ENCODE measurements at regions of chr1 and their contacts with region 1.

Region 1: GRCh38 chr1:203273206-203273868 is 32.0 kb upstream of the BTG2 start:
- DNase-seq: peak; percentile 91
- H3K4me3 ChIP-seq: peak overlapping the region in 1 of 2 donors; percentile 8
- H3K27ac ChIP-seq: peak overlapping the region; percentile 56 to 96
- H3K4me1 ChIP-seq: peaks cover 14 to 16% of the 10 kb centered on the region in 2 donors
- H3K27me3 ChIP-seq: no peaks in the 10 kb centered on the region
- CTCF ChIP-seq: peak; percentile 95 to 99 (median 99)
- POLR2A ChIP-seq: peak in 1 of 2 donors; percentile 52

Region 2: GRCh38 chr1:203304919-203305808 is 31.8 kb after region 1 on chr1 and contains the start of gene BTG2:
- intact Hi-C with region 1: loop called (anchors 5 kb)
- DNase-seq: peak; percentile 93 to 95
- H3K4me3 ChIP-seq: peak within 1 kb of the TSS; percentile 77 to 100
- H3K27ac ChIP-seq: peak within 1 kb of the TSS; percentile 96 to 100
- H3K4me1 ChIP-seq: peaks cover 13 to 19% of the 10 kb centered on the region in 2 donors
- H3K27me3 ChIP-seq: no peaks in the 10 kb centered on the region
- CTCF ChIP-seq: no peak
- POLR2A ChIP-seq: peak; percentile 100
- total RNA-seq, gene BTG2: 14.6 to 95.9 (median 56.5) TPM

Region 3: DNA sequence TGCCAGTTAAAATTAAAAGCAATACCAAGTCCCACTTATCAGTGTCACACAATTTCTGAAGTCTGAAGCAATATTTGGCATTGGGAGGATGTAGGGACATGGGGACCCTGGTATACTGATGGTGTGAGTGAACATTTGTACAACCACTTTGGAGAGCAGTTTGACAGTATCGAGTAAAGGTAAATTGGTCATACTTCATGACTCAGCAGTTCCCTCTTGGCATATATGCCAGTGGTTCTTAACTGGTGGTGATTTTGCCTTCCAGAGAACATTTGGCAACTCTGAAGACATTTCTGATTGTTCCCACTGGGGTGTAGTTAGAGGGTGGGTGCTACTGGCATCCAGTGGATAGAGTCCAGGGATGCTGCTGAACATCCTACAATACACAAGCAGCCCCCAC is 57.9 kb after region 1 on chr1:
- intact Hi-C with region 1: loop called (anchors 5 kb)
- DNase-seq: no peak
- H3K4me3 ChIP-seq: no peak overlapping the region
- H3K27ac ChIP-seq: no peak overlapping the region
- H3K4me1 ChIP-seq: no peaks in the 10 kb centered on the region
- H3K27me3 ChIP-seq: no peaks in the 10 kb centered on the region
- CTCF ChIP-seq: no peak
- POLR2A ChIP-seq: no peak

Region 4: GRCh38 chr1:203486618-203487370 is 213.5 kb after region 1 on chr1:
- intact Hi-C with region 1: loop called (anchors 5 kb)
- DNase-seq: peak in 1 of 2 donors; percentile 54
- H3K4me3 ChIP-seq: no peak overlapping the region
- H3K27ac ChIP-seq: peak overlapping the region; percentile 90 to 91
- H3K4me1 ChIP-seq: peaks cover 0 to 10% of the 10 kb centered on the region in 2 donors
- H3K27me3 ChIP-seq: no peaks in the 10 kb centered on the region
- CTCF ChIP-seq: no peak
- POLR2A ChIP-seq: no peak